Right ventricle myocardium inferior (tissue), 1 donor: ENCODE measurements at regions of chr4 and their contacts with region 1.

Region 1: GRCh38 chr4:108512615-108513505 is 107.5 kb upstream of the RPL34 start:
- DNase-seq: no peak
- ATAC-seq: no peak

Region 2: GRCh38 chr4:108053251-108053711 is 459.6 kb before region 1 on chr4:
- intact Hi-C with region 1: loop called (anchors 10 kb)
- DNase-seq: no peak
- ATAC-seq: no peak